HCT116 (cell line): ENCODE measurements at regions of chr3 and their contacts with region 1.

Region 1: DNA sequence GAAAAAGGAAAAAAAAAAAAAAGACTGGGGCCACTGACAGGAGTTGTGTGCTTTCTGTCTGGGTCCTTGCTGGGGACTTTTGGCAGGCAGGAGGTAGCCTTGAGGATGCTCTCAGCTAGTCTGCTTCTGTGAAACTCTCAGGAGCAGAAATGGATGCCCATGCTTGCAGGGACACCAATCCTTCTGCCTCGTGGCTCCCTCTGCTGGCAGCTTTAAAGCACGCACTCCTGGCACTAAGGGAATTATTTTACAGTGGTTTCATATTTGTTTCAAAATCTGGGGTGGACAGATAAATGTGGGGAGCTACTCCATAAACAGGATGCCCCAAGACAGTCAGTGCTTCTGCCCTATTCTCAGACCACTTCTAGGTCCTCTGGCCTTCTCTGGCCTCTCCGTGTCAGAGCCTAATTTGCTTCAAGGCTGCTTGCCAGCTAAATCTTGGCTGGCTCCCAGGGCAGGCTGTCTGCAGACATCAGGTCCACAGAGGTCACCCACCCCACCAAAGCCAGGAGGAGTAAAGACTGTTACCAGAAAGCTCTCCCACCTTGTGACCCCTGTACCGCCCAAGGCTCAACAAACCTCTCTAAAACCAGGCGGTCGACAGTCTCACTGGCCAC is 17.1 kb downstream of the TRAIP start:
- DNase-seq: peak; percentile 44
- ATAC-seq: peak; percentile 80
- H3K4me3 ChIP-seq: no peak overlapping the region
- H3K27ac ChIP-seq: no peak overlapping the region
- H3K4me1 ChIP-seq: peaks cover 4 to 10% of the 10 kb centered on the region in 2 experiments; a peak in 1 of 4 replicates
- H3K27me3 ChIP-seq: no peaks in the 10 kb centered on the region
- CTCF ChIP-seq: peak; percentile 85 to 92 (median 89)
- POLR2A ChIP-seq: no peak
- RAD21 ChIP-seq: peak; percentile 89

Region 2: GRCh38 chr3:49703443-49703927 is 135.8 kb before region 1 on chr3:
- CTCF ChIA-PET with region 1: interaction called, 11 read pairs
- POLR2A ChIA-PET with region 1: no interaction called
- RAD21 ChIA-PET with region 1: no interaction called
- intact Hi-C with region 1: loop called (anchors 1 kb)
- DNase-seq: peak; percentile 22
- ATAC-seq: peak; percentile 93
- H3K4me3 ChIP-seq: no peak overlapping the region
- H3K27ac ChIP-seq: peak overlapping the region; percentile 5; the same call in 1 of the 2 replicates
- H3K4me1 ChIP-seq: no peaks in the 10 kb centered on the region
- H3K27me3 ChIP-seq: no peaks in the 10 kb centered on the region
- CTCF ChIP-seq: peak; percentile 76 to 91 (median 76)
- POLR2A ChIP-seq: no peak
- RAD21 ChIP-seq: peak; percentile 90

Region 3: GRCh38 chr3:49723628-49724551 is 115.4 kb before region 1 on chr3 and contains the start of gene GMPPB:
- CTCF ChIA-PET with region 1: no interaction called
- POLR2A ChIA-PET with region 1: no interaction called
- RAD21 ChIA-PET with region 1: no interaction called
- intact Hi-C with region 1: loop called (anchors 5 kb)
- DNase-seq: peak; percentile 92
- ATAC-seq: peak; percentile 85
- H3K4me3 ChIP-seq: peak within 1 kb of the TSS; percentile 95
- H3K27ac ChIP-seq: peak within 1 kb of the TSS; percentile 92
- H3K4me1 ChIP-seq: peaks cover 13 to 35% of the 10 kb centered on the region in 2 experiments; a peak in 3 of 4 replicates
- H3K27me3 ChIP-seq: no peaks in the 10 kb centered on the region
- CTCF ChIP-seq: no peak
- POLR2A ChIP-seq: peak; percentile 39
- RAD21 ChIP-seq: no peak
- total RNA-seq, gene GMPPB: 24.1 TPM

Region 4: DNA sequence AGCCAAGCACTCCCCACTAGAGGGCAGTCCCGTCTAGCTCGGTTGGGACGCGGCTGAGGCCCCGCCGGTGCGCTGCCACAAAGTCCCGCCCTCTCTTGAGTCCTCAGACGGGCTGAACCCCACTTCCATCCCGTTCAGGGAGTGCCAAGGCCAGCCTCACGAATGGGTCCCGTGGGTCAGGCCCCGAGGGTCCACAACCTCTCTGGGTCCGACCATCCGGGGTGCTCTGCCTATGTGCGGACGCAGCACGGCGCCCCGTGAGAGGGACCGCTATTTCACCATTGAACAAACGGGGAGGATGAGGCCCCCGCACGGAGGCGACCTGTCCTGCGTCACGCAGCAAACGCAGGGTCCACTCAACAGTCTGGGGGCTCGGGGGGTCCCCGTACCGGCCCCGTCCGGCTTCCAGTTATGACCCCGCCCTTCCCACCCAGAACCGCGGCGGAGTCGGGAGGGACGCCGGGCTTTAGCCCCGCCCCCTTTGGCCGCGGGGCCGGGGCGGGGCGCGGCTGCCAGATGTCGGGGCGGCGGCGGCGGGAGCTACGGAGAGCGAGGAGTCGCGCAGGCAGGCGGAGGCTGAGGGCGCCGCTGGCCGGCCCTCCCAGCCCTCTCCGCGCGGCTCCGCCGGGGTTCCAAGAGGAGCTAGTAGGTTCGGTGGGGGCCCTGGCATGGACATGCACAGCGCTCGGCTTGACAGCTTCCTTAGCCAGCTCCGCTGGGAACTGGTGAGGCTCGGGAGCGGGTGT is 36.4 kb before region 1 on chr3 and contains the start of gene INKA1:
- CTCF ChIA-PET with region 1: interaction called, 34 read pairs
- POLR2A ChIA-PET with region 1: interaction called, 4 read pairs
- RAD21 ChIA-PET with region 1: interaction called, 7 to 9 read pairs
- intact Hi-C with region 1: loop called (anchors 1 kb)
- DNase-seq: peak; percentile 71
- ATAC-seq: peak; percentile 85
- H3K4me3 ChIP-seq: peak within 1 kb of the TSS; percentile 50 to 76
- H3K27ac ChIP-seq: peak within 1 kb of the TSS; percentile 65
- H3K4me1 ChIP-seq: peaks cover 5 to 33% of the 10 kb centered on the region in 2 experiments; a peak in 3 of 4 replicates
- H3K27me3 ChIP-seq: no peaks in the 10 kb centered on the region
- CTCF ChIP-seq: peak; percentile 84 to 94 (median 89); a peak in 5 of 6 replicates
- POLR2A ChIP-seq: peak; percentile 62
- RAD21 ChIP-seq: peak; percentile 92
- total RNA-seq, gene INKA1: 1.6 TPM